Activated CD8-positive, alpha-beta T cell treated with anti-CD3 and anti-CD28 coated beads for 36 hours (primary cell): ENCODE measurements at regions of chr4 and their contacts with region 1.

Region 1: GRCh38 chr4:113547487-113548042 is 214.0 kb downstream of the CAMK2D start:
- DNase-seq: peak; percentile 96
- ATAC-seq: peak; percentile 100
- H3K4me3 Mint-ChIP-seq: no peak overlapping the region
- H3K27ac Mint-ChIP-seq: peak overlapping the region; percentile 72
- H3K4me1 Mint-ChIP-seq: peaks cover 22% of the 10 kb centered on the region
- H3K27me3 Mint-ChIP-seq: no peaks in the 10 kb centered on the region
- CTCF ChIP-seq: peak; percentile 94

Region 2: DNA sequence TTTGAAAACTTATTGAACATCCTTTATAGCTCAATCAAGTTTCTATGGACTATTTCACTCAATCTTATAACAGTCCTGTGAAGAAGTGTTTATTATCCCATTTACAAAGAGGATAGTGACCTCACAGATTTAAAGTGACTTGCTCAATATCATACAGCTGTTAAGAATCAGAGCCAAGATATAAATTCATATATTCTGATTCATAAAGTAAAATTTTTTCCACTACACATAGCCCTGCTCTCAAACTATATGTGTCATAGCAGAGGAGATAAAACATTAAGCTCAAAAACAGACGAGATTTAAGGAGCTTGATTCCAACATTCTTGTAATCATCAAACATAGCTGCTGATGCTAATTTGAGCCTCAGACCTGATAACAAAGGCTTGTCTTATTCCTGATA is 12.9 kb before region 1 on chr4:
- CTCF ChIA-PET with region 1: interaction called, 11 read pairs
- POLR2A ChIA-PET with region 1: no interaction called
- intact Hi-C with region 1: no loop called
- DNase-seq: no peak
- ATAC-seq: no peak
- H3K4me3 Mint-ChIP-seq: no peak overlapping the region
- H3K27ac Mint-ChIP-seq: no peak overlapping the region
- H3K4me1 Mint-ChIP-seq: peaks cover 10% of the 10 kb centered on the region
- H3K27me3 Mint-ChIP-seq: no peaks in the 10 kb centered on the region
- CTCF ChIP-seq: no peak

Region 3: DNA sequence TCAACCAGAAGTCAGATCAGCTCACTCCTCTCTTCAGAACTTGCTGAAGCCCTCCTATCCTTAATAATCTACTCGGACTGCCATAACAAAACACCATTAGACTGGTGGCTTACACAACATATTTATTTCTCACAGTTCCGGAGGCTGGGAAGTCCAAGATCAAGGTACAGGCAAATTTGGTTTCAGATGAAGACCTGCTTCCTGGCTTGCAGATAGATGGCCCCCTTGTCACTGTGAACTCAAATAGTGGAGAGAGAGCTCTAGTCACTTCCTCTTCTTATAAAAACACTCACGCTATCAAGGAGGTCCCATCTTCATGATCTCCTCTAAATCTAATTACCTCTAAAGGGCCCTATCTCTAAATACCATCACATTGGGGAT is 88.9 kb after region 1 on chr4:
- CTCF ChIA-PET with region 1: interaction called, 6 read pairs
- POLR2A ChIA-PET with region 1: no interaction called
- intact Hi-C with region 1: loop called (anchors 5 kb)
- DNase-seq: peak; percentile 24
- ATAC-seq: peak; percentile 79
- H3K4me3 Mint-ChIP-seq: peak overlapping the region; percentile 45
- H3K27ac Mint-ChIP-seq: peak overlapping the region; percentile 88
- H3K4me1 Mint-ChIP-seq: peaks cover 54% of the 10 kb centered on the region
- H3K27me3 Mint-ChIP-seq: no peaks in the 10 kb centered on the region
- CTCF ChIP-seq: no peak

Region 4: GRCh38 chr4:113711883-113712662 is 164.5 kb after region 1 on chr4:
- CTCF ChIA-PET with region 1: interaction called, 11 read pairs
- POLR2A ChIA-PET with region 1: no interaction called
- intact Hi-C with region 1: no loop called
- DNase-seq: no peak
- ATAC-seq: no peak
- H3K4me3 Mint-ChIP-seq: no peak overlapping the region
- H3K27ac Mint-ChIP-seq: no peak overlapping the region
- H3K4me1 Mint-ChIP-seq: peaks cover 37% of the 10 kb centered on the region
- H3K27me3 Mint-ChIP-seq: no peaks in the 10 kb centered on the region
- CTCF ChIP-seq: no peak

Region 5: GRCh38 chr4:113901994-113902787 is 354.6 kb after region 1 on chr4:
- CTCF ChIA-PET with region 1: no interaction called
- POLR2A ChIA-PET with region 1: no interaction called
- intact Hi-C with region 1: loop called (anchors 10 kb)
- DNase-seq: peak; percentile 78
- ATAC-seq: peak; percentile 91
- H3K4me3 Mint-ChIP-seq: peak overlapping the region; percentile 63
- H3K27ac Mint-ChIP-seq: peak overlapping the region; percentile 92
- H3K4me1 Mint-ChIP-seq: peaks cover 65% of the 10 kb centered on the region
- H3K27me3 Mint-ChIP-seq: no peaks in the 10 kb centered on the region
- CTCF ChIP-seq: peak; percentile 64